ENCODE measurements at regions of chr3 and their contacts with region 1.

Region 1: DNA sequence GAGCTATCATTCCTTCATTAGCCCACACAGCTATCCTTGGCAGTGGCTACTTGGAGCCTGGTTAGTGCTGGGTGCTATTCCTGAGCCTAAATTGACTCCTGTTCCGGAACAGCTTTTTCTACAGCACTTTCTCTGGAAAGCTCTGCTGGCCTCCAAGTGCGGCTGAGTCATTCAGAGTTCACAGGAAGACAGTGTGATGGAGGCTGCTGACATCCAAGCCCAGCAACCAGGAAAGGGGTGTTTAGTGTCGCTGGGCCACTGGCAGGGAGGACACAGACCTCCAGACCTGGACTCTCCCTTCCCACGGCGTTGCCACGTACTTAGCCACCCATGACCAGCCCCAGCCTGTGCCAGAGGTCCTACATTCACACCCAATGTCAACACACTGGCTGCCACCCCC is 28.7 kb downstream of the CACNA2D2 start:
- DNase-seq: peak; percentile 18
- ATAC-seq: peak; percentile 70
- H3K4me3 ChIP-seq: no peak overlapping the region
- H3K27ac ChIP-seq: no peak overlapping the region
- H3K4me1 ChIP-seq: no peaks in the 10 kb centered on the region
- H3K27me3 ChIP-seq: no peaks in the 10 kb centered on the region
- CTCF ChIP-seq: no peak

Region 2: GRCh38 chr3:50298836-50299637 is 175.7 kb before region 1 on chr3 and contains the starts of genes HYAL3 and NAA80:
- CTCF ChIA-PET with region 1: interaction called, 22 read pairs
- POLR2A ChIA-PET with region 1: no interaction called
- intact Hi-C with region 1: no loop called
- DNase-seq: peak; percentile 99
- ATAC-seq: peak; percentile 86
- H3K4me3 ChIP-seq: peak within 1 kb of the TSS; percentile 94
- H3K27ac ChIP-seq: peak within 1 kb of the TSS; percentile 90
- H3K4me1 ChIP-seq: peaks cover 20% of the 10 kb centered on the region
- H3K27me3 ChIP-seq: no peaks in the 10 kb centered on the region
- CTCF ChIP-seq: peak; percentile 36; the same call in 1 of the 2 replicates
- total RNA-seq, gene HYAL3: 13.2 and 20.8 TPM in 2 replicates
- total RNA-seq, gene NAA80: 8.7 and 16.6 TPM in 2 replicates

Region 3: DNA sequence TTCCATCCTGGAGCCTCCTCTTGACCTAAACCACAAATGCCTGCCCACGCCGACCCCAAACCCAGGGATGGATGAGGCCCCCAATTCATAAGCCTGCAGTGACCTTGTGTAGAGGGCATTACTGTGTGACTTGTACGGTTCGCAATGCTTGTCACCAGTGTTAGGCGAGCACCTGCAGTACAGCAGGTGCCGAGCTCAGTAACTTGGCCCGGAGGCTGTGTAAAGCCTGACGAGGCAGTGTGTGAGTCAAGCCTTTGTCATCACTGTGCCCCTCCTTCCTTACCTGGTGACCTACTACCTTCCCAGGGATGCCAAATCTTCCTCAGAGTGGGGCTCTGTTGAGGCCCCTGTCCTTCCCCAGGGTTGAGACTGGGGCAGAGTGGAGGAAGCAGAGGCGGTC is 78.2 kb before region 1 on chr3:
- CTCF ChIA-PET with region 1: no interaction called
- POLR2A ChIA-PET with region 1: no interaction called
- intact Hi-C with region 1: no loop called
- DNase-seq: peak; percentile 94
- ATAC-seq: peak; percentile 94
- H3K4me3 ChIP-seq: no peak overlapping the region
- H3K27ac ChIP-seq: no peak overlapping the region
- H3K4me1 ChIP-seq: peaks cover 11% of the 10 kb centered on the region
- H3K27me3 ChIP-seq: no peaks in the 10 kb centered on the region
- CTCF ChIP-seq: no peak